WTC11 (cell line): ENCODE measurements at regions of chr10 and their contacts with region 1.

Region 1: GRCh38 chr10:96513698-96514561 is at the start of gene TLL2:
- DNase-seq: peak; percentile 95
- ATAC-seq: peak; percentile 88
- H3K4me3 Mint-ChIP-seq: peak within 1 kb of the TSS; percentile 77
- H3K27ac Mint-ChIP-seq: no peak within 1 kb of the TSS
- H3K4me1 Mint-ChIP-seq: peaks cover 43% of the 10 kb centered on the region
- H3K27me3 Mint-ChIP-seq: peaks cover 39% of the 10 kb centered on the region
- CTCF ChIP-seq: no peak
- total RNA-seq, gene TLL2: 9.1 to 9.2 TPM (median 9.1 TPM) in 3 replicates

Region 2: GRCh38 chr10:96416643-96417042 is 97.3 kb before region 1 on chr10:
- CTCF ChIA-PET with region 1: interaction called, 15 read pairs
- POLR2A ChIA-PET with region 1: interaction called, 3 read pairs
- DNase-seq: no peak
- ATAC-seq: no peak
- H3K4me3 Mint-ChIP-seq: no peak overlapping the region
- H3K27ac Mint-ChIP-seq: no peak overlapping the region
- H3K4me1 Mint-ChIP-seq: peaks cover 8% of the 10 kb centered on the region; the same call in 1 of the 2 replicates
- H3K27me3 Mint-ChIP-seq: no peaks in the 10 kb centered on the region
- CTCF ChIP-seq: no peak

Region 3: GRCh38 chr10:96470116-96470743 is 43.7 kb before region 1 on chr10:
- CTCF ChIA-PET with region 1: interaction called, 31 read pairs
- POLR2A ChIA-PET with region 1: interaction called, 3 read pairs
- DNase-seq: peak; percentile 73
- ATAC-seq: peak; percentile 95
- H3K4me3 Mint-ChIP-seq: no peak overlapping the region
- H3K27ac Mint-ChIP-seq: no peak overlapping the region
- H3K4me1 Mint-ChIP-seq: peaks cover 27% of the 10 kb centered on the region
- H3K27me3 Mint-ChIP-seq: no peaks in the 10 kb centered on the region
- CTCF ChIP-seq: peak; percentile 46

Region 4: GRCh38 chr10:96496281-96496925 is 17.5 kb before region 1 on chr10:
- CTCF ChIA-PET with region 1: interaction called, 88 read pairs
- POLR2A ChIA-PET with region 1: interaction called, 4 read pairs
- DNase-seq: peak; percentile 30
- ATAC-seq: peak; percentile 80
- H3K4me3 Mint-ChIP-seq: no peak overlapping the region
- H3K27ac Mint-ChIP-seq: no peak overlapping the region
- H3K4me1 Mint-ChIP-seq: peaks cover 36% of the 10 kb centered on the region
- H3K27me3 Mint-ChIP-seq: no peaks in the 10 kb centered on the region; the same call in 1 of the 2 replicates
- CTCF ChIP-seq: no peak

Region 5: DNA sequence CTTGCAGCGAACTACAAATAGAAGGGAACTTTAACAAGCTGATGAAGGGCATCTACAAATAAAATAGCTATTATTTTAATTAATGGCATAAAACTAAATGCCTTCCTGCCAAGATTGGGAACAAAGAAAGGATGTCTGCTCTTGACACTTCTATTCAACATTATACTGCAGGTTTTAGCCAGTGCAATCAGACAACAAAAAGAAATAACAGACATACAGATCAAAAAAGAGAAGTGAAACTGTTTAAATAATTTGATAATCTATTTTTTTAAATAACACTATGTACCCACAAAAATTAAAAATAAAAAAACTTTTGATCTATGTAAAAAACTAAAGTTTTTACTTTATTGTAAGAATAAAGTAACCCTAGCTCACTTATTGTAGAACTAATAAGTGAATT is 22.2 kb after region 1 on chr10:
- CTCF ChIA-PET with region 1: interaction called, 11 read pairs
- POLR2A ChIA-PET with region 1: no interaction called
- DNase-seq: no peak
- ATAC-seq: no peak
- H3K4me3 Mint-ChIP-seq: no peak overlapping the region
- H3K27ac Mint-ChIP-seq: no peak overlapping the region
- H3K4me1 Mint-ChIP-seq: peaks cover 1% of the 10 kb centered on the region; the same call in 1 of the 2 replicates
- H3K27me3 Mint-ChIP-seq: no peaks in the 10 kb centered on the region
- CTCF ChIP-seq: no peak

Region 6: DNA sequence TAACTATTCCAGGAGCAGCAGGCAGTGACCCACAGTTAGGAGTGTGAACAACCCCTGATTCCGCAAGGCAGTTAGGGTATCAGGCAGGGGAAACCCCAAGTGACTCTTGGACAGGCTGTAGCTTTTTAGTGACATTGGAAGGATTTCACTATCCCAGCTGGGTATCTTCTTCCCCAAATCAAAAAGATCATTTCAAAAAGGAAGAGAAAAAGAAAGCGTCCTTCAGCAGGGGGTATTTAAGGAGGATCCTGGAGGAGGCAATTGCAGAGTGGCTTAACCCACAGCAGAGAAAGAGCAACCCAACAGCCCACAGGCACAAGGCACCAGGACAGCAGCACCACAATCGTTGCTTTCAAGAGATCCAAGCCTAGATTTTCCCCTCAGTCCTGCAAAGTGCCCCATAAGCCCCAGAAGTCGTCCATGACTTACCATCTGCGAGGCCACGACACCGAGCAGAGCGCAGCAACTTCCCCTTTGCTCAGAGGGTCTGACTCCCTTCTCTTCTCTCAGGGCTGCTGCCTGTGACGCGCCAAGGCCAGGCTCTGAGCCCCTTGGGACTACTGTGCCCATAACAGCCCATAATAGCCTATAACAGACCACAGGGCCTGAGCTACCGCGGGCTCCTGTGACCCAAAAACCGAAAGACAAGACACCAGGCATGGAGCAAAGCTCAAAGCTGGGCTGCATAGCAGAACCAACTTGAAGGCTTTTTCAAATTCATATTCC is 186.6 kb after region 1 on chr10:
- CTCF ChIA-PET with region 1: no interaction called
- POLR2A ChIA-PET with region 1: no interaction called
- DNase-seq: no peak
- ATAC-seq: 0 out of 2 replicates have a peak, but pooled peaks have one; percentile 28
- H3K4me3 Mint-ChIP-seq: no peak overlapping the region
- H3K27ac Mint-ChIP-seq: no peak overlapping the region; the same call in 1 of the 2 replicates
- H3K4me1 Mint-ChIP-seq: peaks cover 9% of the 10 kb centered on the region
- H3K27me3 Mint-ChIP-seq: no peaks in the 10 kb centered on the region
- CTCF ChIP-seq: no peak